ENCODE measurements at regions of chr5 and their contacts with region 1.

Region 1: DNA sequence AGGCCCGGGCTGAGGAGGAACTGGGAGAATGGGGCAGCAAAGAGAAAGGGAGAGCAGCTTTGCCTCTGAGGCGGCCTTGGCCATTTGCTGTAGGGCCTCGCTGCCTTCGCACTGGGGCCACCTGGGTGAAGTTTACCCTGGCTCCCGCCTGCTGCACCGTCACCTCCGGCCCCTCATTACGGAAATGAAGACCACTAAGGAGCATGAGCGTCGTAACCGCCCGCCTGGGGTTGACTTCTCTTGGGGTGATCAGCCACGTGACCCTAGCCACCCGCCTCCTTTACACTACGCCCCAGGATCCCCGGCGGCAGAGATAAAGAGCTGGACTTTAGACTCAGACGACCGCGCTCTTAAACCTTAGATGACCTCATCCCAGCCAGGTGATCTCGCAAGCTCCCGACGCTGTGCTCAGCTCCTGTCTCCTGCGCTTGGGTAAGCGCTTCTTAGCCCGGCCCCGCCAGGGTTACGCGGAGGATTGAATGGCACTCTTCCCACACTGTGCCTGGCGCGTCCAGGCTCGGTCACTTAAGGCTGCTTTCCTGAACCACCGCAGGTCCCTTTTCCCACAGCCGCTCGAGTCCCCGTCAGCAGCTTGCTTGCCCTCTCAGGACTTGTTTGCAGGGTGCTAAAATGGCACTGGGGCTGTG is 107.9 kb upstream of the LARP1 start:
- DNase-seq: no peak
- H3K4me3 ChIP-seq: no peak overlapping the region
- H3K27ac ChIP-seq: no peak overlapping the region
- H3K4me1 ChIP-seq: no peaks in the 10 kb centered on the region
- CTCF ChIP-seq: no peak

Region 2: GRCh38 chr5:154683101-154683880 is 36.1 kb after region 1 on chr5:
- CTCF ChIA-PET with region 1: no interaction called
- POLR2A ChIA-PET with region 1: no interaction called
- intact Hi-C with region 1: no loop called
- DNase-seq: peak; percentile 70
- H3K4me3 ChIP-seq: peak overlapping the region; percentile 67
- H3K27ac ChIP-seq: peak overlapping the region; percentile 78
- H3K4me1 ChIP-seq: peaks cover 21% of the 10 kb centered on the region
- CTCF ChIP-seq: no peak

Region 3: GRCh38 chr5:154811653-154812365 is 164.6 kb after region 1 on chr5:
- CTCF ChIA-PET with region 1: no interaction called
- POLR2A ChIA-PET with region 1: no interaction called
- intact Hi-C with region 1: loop called (anchors 1 kb)
- DNase-seq: peak; percentile 61
- H3K4me3 ChIP-seq: no peak overlapping the region
- H3K27ac ChIP-seq: no peak overlapping the region
- H3K4me1 ChIP-seq: no peaks in the 10 kb centered on the region
- CTCF ChIP-seq: peak; percentile 95

Region 4: GRCh38 chr5:155136216-155136850 is 489.1 kb after region 1 on chr5:
- CTCF ChIA-PET with region 1: no interaction called
- POLR2A ChIA-PET with region 1: no interaction called
- intact Hi-C with region 1: loop called (anchors 5 kb)
- DNase-seq: no peak
- H3K4me3 ChIP-seq: no peak overlapping the region
- H3K27ac ChIP-seq: no peak overlapping the region
- H3K4me1 ChIP-seq: no peaks in the 10 kb centered on the region
- CTCF ChIP-seq: no peak